Calu3 (cell line): ENCODE measurements at regions of chr9 and their contacts with region 1.

Region 1: DNA sequence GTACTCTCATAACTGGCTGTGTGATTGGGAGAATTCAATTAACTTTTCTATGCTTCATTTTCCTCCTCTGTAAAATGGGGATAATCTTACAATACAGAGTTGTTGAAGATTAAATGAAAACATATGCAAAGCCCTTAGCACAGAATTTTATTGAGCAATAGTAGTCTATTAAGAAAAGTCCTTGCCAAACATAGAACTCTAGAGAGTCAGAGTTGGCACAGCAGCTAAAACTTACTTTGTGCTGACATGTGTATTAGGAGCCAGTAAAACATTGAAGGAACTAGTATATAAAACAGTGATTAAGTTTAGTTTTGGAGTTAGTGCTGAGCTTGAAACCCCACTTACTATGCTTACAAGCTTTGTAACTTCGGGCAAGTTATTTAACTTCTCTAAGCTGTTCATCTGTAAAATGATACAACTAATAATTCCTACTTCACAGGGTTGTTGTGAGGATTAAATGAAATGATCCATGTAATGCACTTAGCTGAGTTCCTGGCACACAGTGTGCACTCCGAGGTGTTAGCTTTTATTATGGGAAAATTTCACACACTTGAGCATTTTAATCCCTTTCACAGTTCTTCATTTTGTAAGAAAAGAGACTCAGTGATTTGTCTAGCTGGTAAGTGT is 20.0 kb upstream of the GRIN3A start:
- DNase-seq: no peak
- H3K4me3 Mint-ChIP-seq: no peak overlapping the region
- H3K27ac Mint-ChIP-seq: no peak overlapping the region
- H3K4me1 Mint-ChIP-seq: no peaks in the 10 kb centered on the region
- H3K27me3 Mint-ChIP-seq: no peaks in the 10 kb centered on the region
- CTCF ChIP-seq: no peak

Region 2: GRCh38 chr9:100689635-100690034 is 1068.8 kb before region 1 on chr9:
- CTCF ChIA-PET with region 1: no interaction called
- intact Hi-C with region 1: no loop called
- DNase-seq: no peak
- H3K4me3 Mint-ChIP-seq: no peak overlapping the region
- H3K27ac Mint-ChIP-seq: no peak overlapping the region
- H3K4me1 Mint-ChIP-seq: no peaks in the 10 kb centered on the region
- H3K27me3 Mint-ChIP-seq: peaks cover 21% of the 10 kb centered on the region
- CTCF ChIP-seq: no peak

Region 3: GRCh38 chr9:101691657-101692056 is 66.8 kb before region 1 on chr9:
- CTCF ChIA-PET with region 1: no interaction called
- intact Hi-C with region 1: loop called (anchors 10 kb)
- DNase-seq: no peak
- H3K4me3 Mint-ChIP-seq: no peak overlapping the region
- H3K27ac Mint-ChIP-seq: no peak overlapping the region
- H3K4me1 Mint-ChIP-seq: no peaks in the 10 kb centered on the region
- H3K27me3 Mint-ChIP-seq: no peaks in the 10 kb centered on the region
- CTCF ChIP-seq: no peak